ENCODE measurements at regions of chr3 and their contacts with region 1.

Region 1: GRCh38 chr3:141237701-141238521 is 6.3 kb downstream of the PXYLP1 start:
- DNase-seq: no peak
- ATAC-seq: no peak
- H3K4me3 ChIP-seq: no peak overlapping the region
- H3K27ac ChIP-seq: no peak overlapping the region
- H3K4me1 ChIP-seq: peaks cover 1 to 23% of the 10 kb centered on the region in 2 experiments; a peak in 3 of 5 replicates
- H3K27me3 ChIP-seq: peaks cover 8 to 49% of the 10 kb centered on the region in 2 experiments; a peak in 3 of 5 replicates
- CTCF ChIP-seq: no peak
- EP300 ChIP-seq: no peak
- POLR2A ChIP-seq: no peak
- RAD21 ChIP-seq: no peak

Region 2: DNA sequence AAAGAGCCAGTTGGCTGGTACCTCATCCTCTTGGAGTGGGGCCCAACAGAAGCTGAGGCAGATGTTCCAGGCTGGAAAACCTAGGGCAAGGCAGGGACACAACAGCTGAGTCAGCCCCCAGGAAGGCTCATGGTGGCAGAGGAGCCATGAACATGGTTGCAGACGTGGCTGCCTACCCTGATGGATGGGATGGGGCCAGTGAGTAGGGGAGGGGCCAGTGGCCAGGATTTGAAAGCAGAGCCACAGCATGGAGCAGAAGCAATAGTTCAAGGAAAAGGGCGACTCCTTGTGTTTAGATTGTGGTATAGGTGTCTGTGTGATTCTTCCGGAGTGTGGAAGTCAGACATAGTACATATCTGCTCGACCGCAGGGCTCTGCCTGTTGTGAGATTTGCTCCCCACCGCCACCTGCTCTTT is 17.9 kb after region 1 on chr3:
- CTCF ChIA-PET with region 1: interaction called, 4 read pairs
- POLR2A ChIA-PET with region 1: interaction called, 5 read pairs
- in situ Hi-C with region 1: no loop called
- intact Hi-C with region 1: loop called (anchors 1 kb)
- DNase-seq: peak; percentile 64 to 74 (median 72)
- ATAC-seq: peak; percentile 99
- H3K4me3 ChIP-seq: no peak overlapping the region
- H3K27ac ChIP-seq: no peak overlapping the region
- H3K4me1 ChIP-seq: no peaks in the 10 kb centered on the region
- H3K27me3 ChIP-seq: peaks cover 14 to 32% of the 10 kb centered on the region in 2 experiments; a peak in 4 of 5 replicates
- CTCF ChIP-seq: peak; percentile 73 to 86 (median 78)
- EP300 ChIP-seq: no peak
- POLR2A ChIP-seq: no peak
- RAD21 ChIP-seq: peak; percentile 70 to 80

Measured in K562 (cell line).